AG04449 (cell line): ENCODE measurements at regions of chr10 and their contacts with region 1.

Region 1: DNA sequence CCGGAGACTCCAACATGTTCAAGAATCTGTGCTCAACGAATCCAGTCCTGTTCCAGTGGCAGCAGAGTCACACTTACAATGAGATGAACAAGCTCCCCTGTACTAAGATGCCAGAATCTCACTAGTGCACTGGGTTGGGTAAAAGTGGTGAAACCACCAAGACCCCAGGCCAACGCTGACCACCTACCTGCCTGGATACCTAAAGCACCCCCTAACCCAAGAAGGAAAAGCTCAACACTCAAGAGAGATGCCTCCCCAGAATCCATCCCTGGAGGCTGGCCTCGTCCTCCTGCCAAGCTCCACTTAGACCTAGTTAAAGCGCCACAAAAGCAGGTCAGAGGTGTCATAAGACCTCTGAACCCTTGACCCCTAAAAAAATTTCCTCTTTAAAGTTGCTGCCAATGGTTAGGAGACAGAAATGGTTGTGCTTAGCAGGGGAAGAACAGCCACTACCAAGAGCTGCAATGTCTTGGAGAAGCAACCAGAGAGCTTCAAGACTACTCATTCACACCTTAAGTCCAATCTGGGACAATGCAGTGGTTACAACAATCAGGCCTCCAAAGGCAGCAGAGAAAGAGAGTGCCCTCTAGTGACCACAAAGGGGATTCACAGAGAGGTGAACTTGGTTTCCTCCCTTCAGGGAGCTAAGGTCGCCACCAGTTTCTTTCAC is 94.6 kb upstream of the MACROH2A2 start:
- DNase-seq: no peak
- H3K4me3 ChIP-seq: no peak overlapping the region
- CTCF ChIP-seq: peak; percentile 77

Region 2: GRCh38 chr10:69929575-69929974 is 28.4 kb before region 1 on chr10:
- CTCF ChIA-PET with region 1: interaction called, 10 read pairs
- POLR2A ChIA-PET with region 1: no interaction called
- DNase-seq: no peak
- H3K4me3 ChIP-seq: no peak overlapping the region
- CTCF ChIP-seq: no peak

Region 3: GRCh38 chr10:69936091-69936490 is 21.9 kb before region 1 on chr10:
- CTCF ChIA-PET with region 1: interaction called, 65 read pairs
- POLR2A ChIA-PET with region 1: no interaction called
- DNase-seq: no peak
- H3K4me3 ChIP-seq: no peak overlapping the region
- CTCF ChIP-seq: peak; percentile 3

Region 4: GRCh38 chr10:69944761-69945160 is 13.3 kb before region 1 on chr10:
- CTCF ChIA-PET with region 1: interaction called, 65 read pairs
- POLR2A ChIA-PET with region 1: no interaction called
- DNase-seq: no peak
- H3K4me3 ChIP-seq: no peak overlapping the region
- CTCF ChIP-seq: no peak

Region 5: GRCh38 chr10:69974551-69975155 is 16.6 kb after region 1 on chr10:
- CTCF ChIA-PET with region 1: interaction called, 37 read pairs
- POLR2A ChIA-PET with region 1: no interaction called
- DNase-seq: no peak
- H3K4me3 ChIP-seq: no peak overlapping the region
- CTCF ChIP-seq: no peak

Region 6: DNA sequence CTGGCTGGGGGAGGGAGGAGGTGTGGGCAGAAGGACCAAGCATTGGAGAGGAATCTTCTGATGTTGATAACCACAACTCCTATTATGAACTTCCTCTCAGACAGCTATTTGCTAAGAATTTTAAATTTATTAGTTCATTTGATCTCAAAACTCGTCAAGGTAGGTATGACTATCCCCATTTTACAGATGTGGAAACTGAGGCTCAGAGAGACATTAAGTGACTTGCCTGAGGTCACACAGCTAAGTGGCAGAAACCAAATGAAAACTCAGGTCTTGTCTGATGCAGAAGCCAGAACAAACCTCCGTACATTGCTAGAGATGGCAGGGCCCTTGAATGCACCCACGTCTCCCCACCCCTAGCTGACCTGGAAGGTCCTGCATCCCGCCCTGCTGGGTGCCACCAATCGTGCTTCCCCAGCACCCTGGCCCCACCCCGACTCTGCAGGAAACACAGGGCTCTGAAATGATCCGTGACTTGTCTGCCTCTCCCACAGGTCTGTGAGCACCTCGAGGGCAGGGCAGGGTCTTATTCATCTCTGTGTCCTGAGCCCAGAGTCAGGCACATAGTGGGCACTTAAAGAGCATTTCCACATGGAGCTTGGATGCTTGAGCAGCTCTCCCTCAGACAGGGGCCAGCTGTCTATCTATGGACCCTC is 514.9 kb after region 1 on chr10:
- CTCF ChIA-PET with region 1: no interaction called
- POLR2A ChIA-PET with region 1: no interaction called
- DNase-seq: no peak
- H3K4me3 ChIP-seq: no peak overlapping the region
- CTCF ChIP-seq: no peak